ENCODE measurements at regions of chr11 and their contacts with region 1.

Region 1: GRCh38 chr11:14907411-14908213 is 15.6 kb upstream of the CYP2R1 start:
- DNase-seq: no peak
- ATAC-seq: peak; percentile 93
- H3K4me3 ChIP-seq: 0 out of 4 replicates have a peak overlapping the region, but pooled peaks of 1 of the 2 experiments have one; percentile 14
- H3K27ac ChIP-seq: no peak overlapping the region
- H3K4me1 ChIP-seq: peaks cover 3 to 12% of the 10 kb centered on the region in 2 experiments; a peak in 2 of 4 replicates
- H3K27me3 ChIP-seq: no peaks in the 10 kb centered on the region
- CTCF ChIP-seq: peak; percentile 70 to 92 (median 84); a peak in 5 of 6 replicates
- POLR2A ChIP-seq: peak; percentile 25
- RAD21 ChIP-seq: peak; percentile 81

Region 2: GRCh38 chr11:14537134-14537599 is 370.4 kb before region 1 on chr11:
- CTCF ChIA-PET with region 1: interaction called, 5 read pairs
- POLR2A ChIA-PET with region 1: no interaction called
- RAD21 ChIA-PET with region 1: no interaction called
- intact Hi-C with region 1: loop called (anchors 2 kb)
- DNase-seq: no peak
- ATAC-seq: peak; percentile 69
- H3K4me3 ChIP-seq: no peak overlapping the region
- H3K27ac ChIP-seq: no peak overlapping the region
- H3K4me1 ChIP-seq: peaks cover 0 to 8% of the 10 kb centered on the region in 2 experiments; a peak in 2 of 4 replicates
- H3K27me3 ChIP-seq: no peaks in the 10 kb centered on the region
- CTCF ChIP-seq: peak; percentile 57 to 84 (median 70); a peak in 5 of 6 replicates
- POLR2A ChIP-seq: no peak
- RAD21 ChIP-seq: peak; percentile 70

Region 3: GRCh38 chr11:14751975-14752407 is 155.6 kb before region 1 on chr11:
- CTCF ChIA-PET with region 1: no interaction called
- POLR2A ChIA-PET with region 1: no interaction called
- RAD21 ChIA-PET with region 1: no interaction called
- intact Hi-C with region 1: no loop called
- DNase-seq: no peak
- ATAC-seq: no peak
- H3K4me3 ChIP-seq: no peak overlapping the region
- H3K27ac ChIP-seq: no peak overlapping the region
- H3K4me1 ChIP-seq: no peaks in the 10 kb centered on the region
- H3K27me3 ChIP-seq: no peaks in the 10 kb centered on the region
- CTCF ChIP-seq: no peak
- POLR2A ChIP-seq: no peak
- RAD21 ChIP-seq: no peak

Region 4: DNA sequence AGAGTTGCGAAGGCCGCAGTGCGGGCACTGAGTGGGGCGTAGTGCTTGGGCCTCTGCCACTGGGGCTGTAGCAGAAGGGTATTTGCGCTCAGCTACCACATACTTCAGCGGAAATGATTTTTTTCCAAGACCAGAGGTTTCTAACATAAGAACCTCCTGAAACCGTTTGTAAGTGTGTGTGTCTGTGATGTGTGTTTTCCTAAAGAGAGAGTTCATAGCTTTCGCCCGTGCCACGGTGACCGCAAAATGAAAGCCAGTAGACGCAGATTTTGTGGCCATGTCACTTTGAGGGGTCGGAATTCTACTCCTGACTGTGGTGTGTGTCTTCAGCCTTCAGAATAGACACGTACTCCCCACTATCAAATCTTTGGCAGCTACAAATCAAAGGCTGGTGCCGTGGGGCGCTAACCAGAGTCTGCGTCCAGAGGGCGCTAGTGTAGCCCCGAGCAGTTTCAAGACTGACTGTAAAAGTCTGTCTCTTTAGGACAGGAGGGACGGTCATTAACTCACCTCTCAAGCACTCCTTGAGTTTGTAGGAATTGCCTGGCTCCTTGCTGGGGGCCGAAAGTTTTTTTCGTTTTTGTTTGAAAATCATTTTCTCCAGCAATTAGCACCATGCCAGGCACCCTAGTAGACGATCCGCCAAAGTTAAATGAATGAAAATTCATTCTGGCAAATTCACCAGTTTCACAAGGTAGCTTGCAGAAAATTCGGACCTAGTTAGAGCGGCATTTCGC is 67.1 kb after region 1 on chr11:
- CTCF ChIA-PET with region 1: interaction called, 14 read pairs
- POLR2A ChIA-PET with region 1: no interaction called
- RAD21 ChIA-PET with region 1: no interaction called
- intact Hi-C with region 1: no loop called
- DNase-seq: peak; percentile 54
- ATAC-seq: peak; percentile 86
- H3K4me3 ChIP-seq: no peak overlapping the region
- H3K27ac ChIP-seq: no peak overlapping the region
- H3K4me1 ChIP-seq: peaks cover 0 to 8% of the 10 kb centered on the region in 2 experiments; a peak in 1 of 4 replicates
- H3K27me3 ChIP-seq: no peaks in the 10 kb centered on the region
- CTCF ChIP-seq: peak; percentile 78 to 95 (median 90)
- POLR2A ChIP-seq: no peak
- RAD21 ChIP-seq: peak; percentile 70

Region 5: GRCh38 chr11:15101072-15101709 is 193.6 kb after region 1 on chr11:
- CTCF ChIA-PET with region 1: interaction called, 39 read pairs
- POLR2A ChIA-PET with region 1: no interaction called
- RAD21 ChIA-PET with region 1: interaction called in 1 of 2 experiments, 10 read pairs
- intact Hi-C with region 1: loop called (anchors 2 kb)
- DNase-seq: peak; percentile 57
- ATAC-seq: peak; percentile 97
- H3K4me3 ChIP-seq: no peak overlapping the region
- H3K27ac ChIP-seq: no peak overlapping the region
- H3K4me1 ChIP-seq: peaks cover 5 to 14% of the 10 kb centered on the region in 2 experiments
- H3K27me3 ChIP-seq: no peaks in the 10 kb centered on the region; the same call in 1 of the 2 replicates
- CTCF ChIP-seq: peak; percentile 92 to 95 (median 93)
- POLR2A ChIP-seq: no peak
- RAD21 ChIP-seq: peak; percentile 96

Region 6: DNA sequence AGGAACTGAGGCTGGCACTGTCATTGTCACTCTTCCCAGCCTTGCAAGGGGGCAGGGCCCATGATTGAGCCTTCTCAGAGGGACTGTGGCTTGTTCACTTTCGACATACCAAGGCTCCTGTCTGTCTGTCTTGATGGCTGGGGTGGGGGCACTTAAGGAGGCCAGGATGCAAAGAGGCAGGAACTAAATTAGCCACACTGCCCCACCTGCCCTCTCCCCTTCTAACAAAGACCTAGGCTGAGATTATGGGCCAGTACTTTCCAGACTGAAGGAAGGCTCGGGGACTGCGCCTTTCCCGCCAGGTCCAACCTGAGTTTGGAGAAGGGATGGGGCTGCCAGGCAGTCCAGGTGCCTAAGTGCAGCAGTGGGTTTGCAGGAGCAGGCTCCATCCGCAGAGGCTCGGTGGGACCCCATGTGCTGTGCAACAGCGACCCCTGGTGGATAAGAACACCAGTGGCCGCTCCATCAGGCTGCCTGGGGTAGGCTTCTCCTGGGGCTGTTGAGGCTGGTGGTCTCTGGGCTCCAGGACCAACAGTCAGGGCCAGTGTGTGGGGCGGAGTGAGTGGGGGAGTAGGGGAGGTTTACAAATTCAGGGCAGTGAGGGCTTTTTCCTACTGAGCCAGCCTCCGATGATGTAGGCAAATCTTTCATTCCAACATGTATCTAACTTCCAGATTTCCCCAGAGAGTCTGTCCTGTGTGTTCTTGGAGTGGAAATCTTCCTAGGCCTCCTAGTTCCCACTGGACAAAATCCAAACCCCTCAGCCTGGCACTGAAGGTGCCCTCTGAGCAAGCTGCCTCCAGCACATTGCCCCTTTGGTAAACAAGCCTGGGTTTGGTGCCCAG is 301.0 kb after region 1 on chr11:
- CTCF ChIA-PET with region 1: interaction called, 61 read pairs
- POLR2A ChIA-PET with region 1: no interaction called
- RAD21 ChIA-PET with region 1: interaction called in 1 of 2 experiments, 5 read pairs
- intact Hi-C with region 1: loop called (anchors 1 kb)
- DNase-seq: peak; percentile 43
- ATAC-seq: peak; percentile 99
- H3K4me3 ChIP-seq: no peak overlapping the region
- H3K27ac ChIP-seq: no peak overlapping the region
- H3K4me1 ChIP-seq: no peaks in the 10 kb centered on the region
- H3K27me3 ChIP-seq: no peaks in the 10 kb centered on the region
- CTCF ChIP-seq: peak; percentile 83 to 95 (median 90)
- POLR2A ChIP-seq: no peak
- RAD21 ChIP-seq: peak; percentile 98

Region 7: GRCh38 chr11:16605894-16606783 is 1698.5 kb after region 1 on chr11:
- CTCF ChIA-PET with region 1: no interaction called
- POLR2A ChIA-PET with region 1: no interaction called
- RAD21 ChIA-PET with region 1: no interaction called
- intact Hi-C with region 1: loop called (anchors 10 kb)
- DNase-seq: peak; percentile 74
- ATAC-seq: peak; percentile 68
- H3K4me3 ChIP-seq: peak overlapping the region; percentile 48 to 57
- H3K27ac ChIP-seq: no peak overlapping the region
- H3K4me1 ChIP-seq: peaks cover 25 to 37% of the 10 kb centered on the region in 2 experiments
- H3K27me3 ChIP-seq: peaks cover 50% of the 10 kb centered on the region
- CTCF ChIP-seq: peak; percentile 57 to 96 (median 95); a peak in 5 of 6 replicates
- POLR2A ChIP-seq: no peak
- RAD21 ChIP-seq: peak; percentile 64

Measured in HCT116 (cell line).